ENCODE measurements at regions of chr5 and their contacts with region 1.

Region 1: GRCh38 chr5:33321026-33321425 is 119.7 kb upstream of the TARS1 start:
- DNase-seq: no peak
- H3K4me3 Mint-ChIP-seq: no peak overlapping the region
- H3K27ac Mint-ChIP-seq: no peak overlapping the region
- H3K4me1 Mint-ChIP-seq: no peaks in the 10 kb centered on the region
- H3K27me3 Mint-ChIP-seq: no peaks in the 10 kb centered on the region
- CTCF ChIP-seq: no peak

Region 2: DNA sequence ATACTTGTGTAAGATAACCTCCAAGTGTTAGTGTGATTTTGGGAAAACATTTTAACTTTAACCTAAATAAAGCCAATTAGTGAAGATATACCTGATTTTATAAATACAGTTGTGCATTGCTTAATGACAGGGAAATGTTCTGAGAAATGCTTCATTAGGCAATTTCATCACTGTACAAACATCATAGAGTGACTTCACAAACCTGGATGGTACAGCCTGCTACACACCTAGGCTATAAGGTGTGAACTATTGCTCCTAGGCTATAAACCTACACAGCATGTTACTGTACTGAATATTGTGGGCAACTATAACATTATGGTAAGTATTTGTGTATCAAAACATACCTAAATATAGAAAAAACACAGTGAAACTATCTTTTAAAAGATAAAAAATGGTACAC is 47.0 kb before region 1 on chr5:
- CTCF ChIA-PET with region 1: no interaction called
- intact Hi-C with region 1: loop called (anchors 1 kb)
- DNase-seq: no peak
- H3K4me3 Mint-ChIP-seq: no peak overlapping the region
- H3K27ac Mint-ChIP-seq: no peak overlapping the region
- H3K4me1 Mint-ChIP-seq: no peaks in the 10 kb centered on the region
- H3K27me3 Mint-ChIP-seq: no peaks in the 10 kb centered on the region
- CTCF ChIP-seq: no peak

Region 3: GRCh38 chr5:33549982-33550567 is 229.0 kb after region 1 on chr5:
- CTCF ChIA-PET with region 1: no interaction called
- intact Hi-C with region 1: no loop called
- DNase-seq: no peak
- H3K4me3 Mint-ChIP-seq: no peak overlapping the region
- H3K27ac Mint-ChIP-seq: no peak overlapping the region
- H3K4me1 Mint-ChIP-seq: no peaks in the 10 kb centered on the region
- H3K27me3 Mint-ChIP-seq: no peaks in the 10 kb centered on the region
- CTCF ChIP-seq: no peak

Region 4: GRCh38 chr5:33601881-33602280 is 280.9 kb after region 1 on chr5:
- CTCF ChIA-PET with region 1: no interaction called
- intact Hi-C with region 1: no loop called
- DNase-seq: no peak
- H3K4me3 Mint-ChIP-seq: no peak overlapping the region
- H3K27ac Mint-ChIP-seq: no peak overlapping the region
- H3K4me1 Mint-ChIP-seq: no peaks in the 10 kb centered on the region
- H3K27me3 Mint-ChIP-seq: no peaks in the 10 kb centered on the region
- CTCF ChIP-seq: no peak